ENCODE measurements at regions of chr11 and their contacts with region 1.

Region 1: DNA sequence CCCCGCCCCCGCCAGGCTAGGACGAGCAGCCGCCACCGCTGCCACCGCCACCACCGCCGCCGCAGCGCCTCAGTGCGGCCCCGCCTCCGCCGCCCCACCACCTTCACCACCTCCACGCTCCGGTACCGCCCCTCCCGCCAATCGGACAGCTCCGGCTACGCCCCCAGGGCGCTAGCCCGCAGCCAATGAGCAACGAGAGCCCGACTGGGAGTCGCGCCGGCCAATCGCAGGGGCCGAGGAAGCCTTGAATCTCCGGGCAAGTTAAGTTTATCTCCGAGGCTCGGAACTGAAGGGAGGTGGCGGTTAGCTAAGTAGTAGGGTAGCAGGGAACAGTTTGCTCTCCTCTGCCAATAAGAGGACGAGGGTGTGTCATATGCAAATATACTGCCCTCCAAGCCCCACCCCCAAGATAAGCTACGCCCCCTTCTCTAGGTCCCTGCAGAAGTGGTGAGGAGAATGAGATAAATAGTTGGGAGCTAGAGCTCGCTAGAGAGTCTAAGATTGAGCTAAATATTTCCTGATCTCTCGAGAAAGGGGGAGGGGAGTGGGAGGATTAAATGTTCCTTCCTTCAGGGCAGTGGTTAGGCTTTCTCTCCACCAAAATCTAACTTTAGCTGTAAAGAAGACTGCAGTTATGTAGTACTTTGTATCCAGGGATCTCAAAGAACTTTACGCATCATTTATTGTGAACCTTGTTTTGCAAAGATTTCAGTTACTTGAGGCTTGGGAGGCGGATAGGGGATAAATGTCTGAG is at the start of gene SESN3:
- DNase-seq: peak; percentile 99
- ATAC-seq: peak; percentile 83
- H3K4me3 ChIP-seq: peak within 1 kb of the TSS; percentile 73 to 94 (median 88)
- H3K4me3 Mint-ChIP-seq: no peak within 1 kb of the TSS
- H3K27ac ChIP-seq: peak within 1 kb of the TSS; percentile 94 to 96
- H3K27ac Mint-ChIP-seq: peak within 1 kb of the TSS; percentile 95
- H3K4me1 ChIP-seq: peaks cover 29 to 32% of the 10 kb centered on the region in 2 donors
- H3K4me1 Mint-ChIP-seq: peaks cover 31% of the 10 kb centered on the region
- H3K27me3 ChIP-seq: no peaks in the 10 kb centered on the region
- H3K27me3 Mint-ChIP-seq: no peaks in the 10 kb centered on the region
- CTCF ChIP-seq: no peak
- total RNA-seq, gene SESN3: 519 and 537 TPM in 2 replicates

Region 2: DNA sequence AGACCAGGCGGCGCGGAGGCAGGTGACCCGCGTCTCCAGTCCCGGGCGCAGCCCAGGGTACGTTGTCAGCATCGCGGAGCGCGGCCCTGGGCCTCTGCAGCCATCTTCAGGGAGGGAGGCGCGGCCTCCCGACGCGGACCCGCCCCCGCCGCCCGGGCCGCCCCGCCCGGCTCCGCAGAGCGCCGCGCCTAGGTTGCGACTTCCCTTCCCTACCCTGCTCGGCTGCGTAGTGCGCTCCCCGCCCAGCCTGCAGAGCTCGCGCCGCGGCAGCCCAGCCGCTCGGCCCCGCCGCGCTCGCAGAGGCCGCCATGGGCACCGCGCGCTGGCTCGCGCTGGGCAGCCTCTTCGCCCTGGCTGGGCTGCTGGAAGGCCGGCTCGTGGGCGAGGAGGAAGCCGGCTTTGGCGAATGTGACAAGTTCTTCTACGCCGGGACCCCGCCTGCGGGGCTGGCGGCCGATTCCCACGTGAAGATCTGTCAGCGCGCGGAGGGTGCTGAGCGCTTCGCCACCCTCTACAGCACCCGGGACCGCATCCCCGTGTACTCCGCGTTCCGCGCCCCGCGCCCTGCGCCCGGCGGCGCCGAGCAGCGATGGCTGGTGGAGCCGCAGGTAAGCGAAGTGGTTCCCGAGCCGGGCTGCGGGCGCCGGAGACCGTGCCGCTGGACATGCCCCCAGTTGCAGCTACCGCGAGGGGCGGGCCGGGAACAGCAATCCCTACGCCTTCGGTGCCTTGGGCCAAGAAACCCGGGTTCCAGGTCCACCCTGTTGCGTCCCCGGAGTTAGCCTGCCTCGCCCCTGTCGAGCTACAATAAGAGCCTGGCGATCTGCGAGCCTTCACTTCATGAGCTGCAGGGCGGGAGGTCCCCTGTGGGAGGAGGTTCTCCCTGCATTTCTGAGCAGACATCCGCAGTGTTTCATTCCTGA is 141.4 kb before region 1 on chr11 and contains the start of gene ENDOD1:
- CTCF ChIA-PET with region 1: interaction called, 3 read pairs
- POLR2A ChIA-PET with region 1: interaction called, 5 read pairs
- intact Hi-C with region 1: loop called (anchors 5 kb)
- DNase-seq: peak; percentile 93
- ATAC-seq: peak; percentile 94
- H3K4me3 ChIP-seq: peak within 1 kb of the TSS; percentile 13 to 82 (median 79)
- H3K4me3 Mint-ChIP-seq: peak within 1 kb of the TSS; percentile 94
- H3K27ac ChIP-seq: peak within 1 kb of the TSS; percentile 79 to 94
- H3K27ac Mint-ChIP-seq: peak within 1 kb of the TSS; percentile 98
- H3K4me1 ChIP-seq: peaks cover 50 to 52% of the 10 kb centered on the region in 2 donors
- H3K4me1 Mint-ChIP-seq: peaks cover 59% of the 10 kb centered on the region
- H3K27me3 ChIP-seq: no peaks in the 10 kb centered on the region
- H3K27me3 Mint-ChIP-seq: no peaks in the 10 kb centered on the region
- CTCF ChIP-seq: no peak
- total RNA-seq, gene ENDOD1: 11.7 and 12.0 TPM in 2 replicates

Region 3: DNA sequence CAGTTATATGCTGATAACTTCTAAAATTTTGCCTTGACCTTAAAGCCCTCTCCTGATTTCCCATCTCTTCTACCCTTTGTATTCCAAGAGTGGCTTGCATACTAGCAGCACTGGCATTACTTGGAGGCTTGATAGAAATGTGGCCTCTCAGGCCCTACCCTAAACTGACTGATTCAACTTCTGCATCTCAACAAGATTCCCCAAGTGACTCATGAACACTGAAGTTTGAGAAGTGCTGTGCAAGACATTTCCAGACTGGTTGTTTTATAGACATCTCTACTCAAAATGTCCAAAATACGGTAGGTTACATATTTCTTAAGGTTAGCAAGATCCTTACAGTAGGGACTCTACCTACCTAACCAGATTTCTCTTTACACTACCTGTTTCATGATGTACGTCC is 48.9 kb before region 1 on chr11:
- CTCF ChIA-PET with region 1: no interaction called
- POLR2A ChIA-PET with region 1: no interaction called
- intact Hi-C with region 1: no loop called
- DNase-seq: no peak
- ATAC-seq: no peak
- H3K4me3 ChIP-seq: no peak overlapping the region
- H3K4me3 Mint-ChIP-seq: no peak overlapping the region
- H3K27ac ChIP-seq: peak overlapping the region in 1 of 2 donors; percentile 34
- H3K27ac Mint-ChIP-seq: peak overlapping the region; percentile 57
- H3K4me1 ChIP-seq: no peaks in the 10 kb centered on the region
- H3K4me1 Mint-ChIP-seq: peaks cover 16% of the 10 kb centered on the region
- H3K27me3 ChIP-seq: no peaks in the 10 kb centered on the region
- H3K27me3 Mint-ChIP-seq: no peaks in the 10 kb centered on the region
- CTCF ChIP-seq: no peak

Region 4: GRCh38 chr11:95212609-95213008 is 18.7 kb before region 1 on chr11:
- CTCF ChIA-PET with region 1: interaction called, 4 read pairs
- POLR2A ChIA-PET with region 1: interaction called, 4 read pairs
- intact Hi-C with region 1: loop called (anchors 2 kb)
- DNase-seq: no peak
- ATAC-seq: no peak
- H3K4me3 ChIP-seq: no peak overlapping the region
- H3K4me3 Mint-ChIP-seq: no peak overlapping the region
- H3K27ac ChIP-seq: no peak overlapping the region
- H3K27ac Mint-ChIP-seq: no peak overlapping the region
- H3K4me1 ChIP-seq: peaks cover 13 to 23% of the 10 kb centered on the region in 2 donors
- H3K4me1 Mint-ChIP-seq: peaks cover 45% of the 10 kb centered on the region
- H3K27me3 ChIP-seq: no peaks in the 10 kb centered on the region
- H3K27me3 Mint-ChIP-seq: no peaks in the 10 kb centered on the region
- CTCF ChIP-seq: no peak

Region 5: GRCh38 chr11:95266751-95267374 is 35.6 kb after region 1 on chr11:
- CTCF ChIA-PET with region 1: no interaction called
- POLR2A ChIA-PET with region 1: interaction called, 3 read pairs
- intact Hi-C with region 1: loop called (anchors 5 kb)
- DNase-seq: no peak
- ATAC-seq: no peak
- H3K4me3 ChIP-seq: no peak overlapping the region
- H3K4me3 Mint-ChIP-seq: no peak overlapping the region
- H3K27ac ChIP-seq: no peak overlapping the region
- H3K27ac Mint-ChIP-seq: no peak overlapping the region
- H3K4me1 ChIP-seq: peaks cover 10 to 12% of the 10 kb centered on the region in 2 donors
- H3K4me1 Mint-ChIP-seq: peaks cover 23% of the 10 kb centered on the region
- H3K27me3 ChIP-seq: no peaks in the 10 kb centered on the region
- H3K27me3 Mint-ChIP-seq: no peaks in the 10 kb centered on the region
- CTCF ChIP-seq: no peak

Region 6: DNA sequence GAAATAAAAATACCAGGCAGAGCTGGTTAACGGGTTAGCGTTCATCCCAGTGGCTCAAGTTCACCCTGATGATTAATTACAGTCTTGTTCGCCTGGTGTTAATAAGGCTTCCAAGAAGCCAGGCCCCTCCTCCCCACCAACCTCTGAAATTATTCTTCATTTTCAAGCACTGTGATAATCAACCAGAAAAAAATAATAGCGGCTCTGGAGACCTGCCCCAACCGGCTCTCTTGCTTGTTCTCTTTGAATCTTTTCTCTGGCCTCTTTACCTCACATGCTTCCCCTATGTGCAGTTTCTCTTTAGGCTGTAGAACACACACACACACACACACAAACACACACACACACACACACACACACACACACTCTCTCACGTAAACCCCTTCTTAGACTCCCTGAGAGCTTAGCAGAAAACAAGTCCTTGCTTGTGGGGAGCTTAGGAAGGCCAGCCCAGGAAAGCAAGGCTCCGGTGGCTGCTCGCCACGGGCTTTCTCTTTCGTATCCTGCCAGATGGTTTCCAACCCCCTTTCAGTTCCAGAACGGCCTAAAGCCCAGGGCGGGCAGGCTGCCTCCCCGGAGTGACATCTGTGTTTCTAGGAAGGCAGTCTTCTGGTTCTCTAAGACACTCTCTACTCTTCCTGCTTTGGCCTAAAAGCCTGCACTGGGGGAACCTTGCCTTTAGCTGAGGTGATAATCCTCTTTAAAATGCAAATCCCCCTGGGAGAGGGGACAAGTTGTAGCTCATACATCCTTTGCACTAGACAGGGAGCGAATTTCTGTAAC is 106.1 kb after region 1 on chr11:
- CTCF ChIA-PET with region 1: interaction called, 10 read pairs
- POLR2A ChIA-PET with region 1: interaction called, 10 read pairs
- intact Hi-C with region 1: loop called (anchors 2 kb)
- DNase-seq: peak; percentile 80
- ATAC-seq: peak; percentile 58
- H3K4me3 ChIP-seq: peak overlapping the region in 4 of 5 experiments; percentile 5 to 51 (median 38)
- H3K4me3 Mint-ChIP-seq: no peak overlapping the region
- H3K27ac ChIP-seq: peak overlapping the region; percentile 67 to 83
- H3K27ac Mint-ChIP-seq: no peak overlapping the region
- H3K4me1 ChIP-seq: peaks cover 21 to 32% of the 10 kb centered on the region in 2 donors
- H3K4me1 Mint-ChIP-seq: peaks cover 5% of the 10 kb centered on the region
- H3K27me3 ChIP-seq: no peaks in the 10 kb centered on the region
- H3K27me3 Mint-ChIP-seq: no peaks in the 10 kb centered on the region
- CTCF ChIP-seq: no peak

Region 7: DNA sequence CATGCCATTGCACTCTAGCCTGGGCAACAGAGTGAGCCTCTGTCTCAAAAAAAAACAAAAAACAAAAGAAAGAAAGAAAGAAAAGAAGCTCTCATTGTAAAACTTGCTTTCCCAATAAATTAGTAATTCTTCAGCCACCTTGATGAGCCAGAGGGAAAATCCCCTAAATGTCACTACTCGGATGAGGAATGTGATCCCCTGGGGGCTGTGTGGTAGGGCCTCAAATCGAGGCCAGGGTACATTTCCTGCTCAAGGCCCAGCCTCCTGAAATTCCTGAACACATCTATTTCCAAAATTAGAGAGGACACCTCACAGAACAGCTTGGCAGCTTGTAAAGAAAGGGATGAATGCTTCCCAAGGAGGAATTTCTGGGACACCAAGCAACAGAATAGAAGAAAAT is 146.8 kb after region 1 on chr11:
- CTCF ChIA-PET with region 1: no interaction called
- POLR2A ChIA-PET with region 1: no interaction called
- intact Hi-C with region 1: no loop called
- DNase-seq: no peak
- ATAC-seq: no peak
- H3K4me3 ChIP-seq: no peak overlapping the region
- H3K4me3 Mint-ChIP-seq: no peak overlapping the region
- H3K27ac ChIP-seq: no peak overlapping the region
- H3K27ac Mint-ChIP-seq: no peak overlapping the region
- H3K4me1 ChIP-seq: no peaks in the 10 kb centered on the region
- H3K4me1 Mint-ChIP-seq: peaks cover 3% of the 10 kb centered on the region
- H3K27me3 ChIP-seq: no peaks in the 10 kb centered on the region
- H3K27me3 Mint-ChIP-seq: peaks cover 4% of the 10 kb centered on the region
- CTCF ChIP-seq: no peak

Region 8: GRCh38 chr11:95715777-95716241 is 484.5 kb after region 1 on chr11:
- CTCF ChIA-PET with region 1: interaction called, 39 read pairs
- POLR2A ChIA-PET with region 1: interaction called, 38 read pairs
- intact Hi-C with region 1: loop called (anchors 1 kb)
- DNase-seq: peak; percentile 94
- ATAC-seq: peak; percentile 80
- H3K4me3 ChIP-seq: peak overlapping the region in 4 of 5 experiments; percentile 16 to 55 (median 28)
- H3K4me3 Mint-ChIP-seq: peak overlapping the region; percentile 68
- H3K27ac ChIP-seq: peak overlapping the region; percentile 94 to 98
- H3K27ac Mint-ChIP-seq: peak overlapping the region; percentile 92
- H3K4me1 ChIP-seq: peaks cover 80 to 84% of the 10 kb centered on the region in 2 donors
- H3K4me1 Mint-ChIP-seq: peaks cover 85% of the 10 kb centered on the region
- H3K27me3 ChIP-seq: no peaks in the 10 kb centered on the region
- H3K27me3 Mint-ChIP-seq: no peaks in the 10 kb centered on the region
- CTCF ChIP-seq: no peak